HepG2 (cell line): ENCODE measurements at regions of chr17 and their contacts with region 1.

Region 1: GRCh38 chr17:78933959-78934568 is 8.9 kb upstream of the TIMP2 start:
- DNase-seq: peak; percentile 77
- ATAC-seq: peak; percentile 32
- H3K4me3 ChIP-seq: peak overlapping the region in 2 of 3 experiments; percentile 2 to 61; a peak in 3 of 6 replicates
- H3K27ac ChIP-seq: no peak overlapping the region
- H3K4me1 ChIP-seq: peaks cover 41% of the 10 kb centered on the region
- H3K27me3 ChIP-seq: peaks cover 10 to 54% of the 10 kb centered on the region in 2 experiments; a peak in 4 of 5 replicates
- CTCF ChIP-seq: no peak
- EP300 ChIP-seq: no peak
- POLR2A ChIP-seq: no peak
- RAD21 ChIP-seq: no peak

Region 2: DNA sequence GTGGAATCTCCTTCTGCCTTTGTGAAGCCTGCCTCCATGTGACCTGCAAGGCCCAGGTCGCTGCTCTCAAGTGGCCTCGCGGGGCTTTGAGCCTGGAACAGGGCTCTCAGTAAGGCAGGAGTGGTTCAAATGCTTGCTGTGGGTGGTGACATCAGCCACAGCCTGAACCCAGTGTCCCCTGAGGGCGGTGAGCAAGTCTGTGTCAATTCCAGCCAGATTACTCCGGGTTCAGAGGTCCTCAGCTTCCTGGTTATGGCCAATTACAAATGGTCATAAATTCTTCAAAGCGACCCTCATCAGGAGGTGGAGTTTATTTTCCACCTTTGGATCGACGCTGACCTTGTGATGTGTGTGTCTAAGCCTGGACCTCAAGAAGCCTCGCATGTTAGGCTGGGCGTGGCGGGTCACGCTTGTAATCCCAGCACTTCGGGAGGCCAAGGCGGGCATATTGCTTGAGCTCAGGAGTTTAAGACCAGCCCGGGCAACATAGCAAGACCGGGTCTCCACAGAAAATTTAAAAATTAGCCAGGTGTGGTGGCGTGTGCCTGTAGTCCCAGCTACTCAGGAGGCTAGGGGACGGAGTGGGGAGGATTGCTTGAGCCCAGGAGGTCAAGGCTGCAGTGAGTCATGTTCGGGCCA is 28.4 kb after region 1 on chr17:
- CTCF ChIA-PET with region 1: no interaction called
- POLR2A ChIA-PET with region 1: interaction called, 20 read pairs
- in situ Hi-C with region 1: no loop called
- intact Hi-C with region 1: loop called (anchors 5 kb)
- DNase-seq: peak; percentile 96
- ATAC-seq: peak; percentile 91
- H3K4me3 ChIP-seq: no peak overlapping the region
- H3K27ac ChIP-seq: peak overlapping the region; percentile 70
- H3K4me1 ChIP-seq: peaks cover 61% of the 10 kb centered on the region
- H3K27me3 ChIP-seq: peaks cover 0 to 1% of the 10 kb centered on the region in 2 experiments; a peak in 3 of 5 replicates
- CTCF ChIP-seq: peak; percentile 24
- EP300 ChIP-seq: peak; percentile 79 to 85
- POLR2A ChIP-seq: peak; percentile 46 to 60; a peak in 3 of 4 replicates
- RAD21 ChIP-seq: peak; percentile 10; the same call in 1 of the 2 replicates

Region 3: DNA sequence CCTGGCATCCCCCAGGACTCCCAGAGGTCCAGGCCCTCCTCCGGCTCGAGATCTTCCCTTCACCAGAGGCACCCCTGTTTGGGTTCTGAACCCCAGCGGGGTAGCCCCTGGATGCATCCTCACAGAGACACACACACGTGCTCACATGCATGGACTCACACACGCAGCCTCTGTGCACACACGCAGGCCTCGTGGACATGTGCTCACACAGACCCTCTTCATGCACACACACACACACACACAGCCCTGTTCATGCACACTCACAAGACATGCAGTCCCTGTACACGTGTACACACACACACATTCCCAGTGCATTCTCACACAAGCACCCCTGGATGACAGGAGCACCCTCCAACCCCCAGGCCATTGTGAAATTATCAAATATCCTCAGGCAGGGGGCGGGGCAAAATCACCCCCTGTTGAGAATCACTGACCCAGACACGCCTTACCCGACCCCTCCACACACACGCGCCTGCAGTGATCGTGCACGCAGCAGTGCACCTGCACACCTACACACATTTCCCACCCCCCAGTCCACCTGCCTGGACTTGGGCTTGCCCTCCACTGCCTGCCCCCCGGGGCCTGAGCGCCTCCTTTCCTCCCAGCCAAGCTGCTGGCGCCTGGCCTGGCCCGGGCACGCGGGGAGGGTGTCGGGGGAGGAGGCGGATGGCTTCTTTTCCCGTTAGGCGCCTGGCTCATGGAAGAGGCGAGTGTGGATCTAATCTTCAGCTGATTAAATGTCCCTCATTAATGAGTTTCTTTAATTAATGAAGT is 203.1 kb after region 1 on chr17:
- CTCF ChIA-PET with region 1: no interaction called
- POLR2A ChIA-PET with region 1: no interaction called
- in situ Hi-C with region 1: no loop called
- intact Hi-C with region 1: no loop called
- DNase-seq: no peak
- ATAC-seq: no peak
- H3K4me3 ChIP-seq: no peak overlapping the region
- H3K27ac ChIP-seq: no peak overlapping the region
- H3K4me1 ChIP-seq: no peaks in the 10 kb centered on the region
- H3K27me3 ChIP-seq: peaks cover 35 to 100% of the 10 kb centered on the region in 2 experiments
- CTCF ChIP-seq: no peak
- EP300 ChIP-seq: no peak
- POLR2A ChIP-seq: no peak
- RAD21 ChIP-seq: no peak

Region 4: GRCh38 chr17:80586846-80587228 is 1652.8 kb after region 1 on chr17:
- CTCF ChIA-PET with region 1: no interaction called
- POLR2A ChIA-PET with region 1: no interaction called
- in situ Hi-C with region 1: no loop called
- intact Hi-C with region 1: loop called (anchors 10 kb)
- DNase-seq: no peak
- ATAC-seq: no peak
- H3K4me3 ChIP-seq: no peak overlapping the region
- H3K27ac ChIP-seq: no peak overlapping the region
- H3K4me1 ChIP-seq: peaks cover 9% of the 10 kb centered on the region
- H3K27me3 ChIP-seq: no peaks in the 10 kb centered on the region
- CTCF ChIP-seq: no peak
- EP300 ChIP-seq: no peak
- POLR2A ChIP-seq: no peak
- RAD21 ChIP-seq: no peak